ENCODE measurements at regions of chr12 and their contacts with region 1.

Region 1: DNA sequence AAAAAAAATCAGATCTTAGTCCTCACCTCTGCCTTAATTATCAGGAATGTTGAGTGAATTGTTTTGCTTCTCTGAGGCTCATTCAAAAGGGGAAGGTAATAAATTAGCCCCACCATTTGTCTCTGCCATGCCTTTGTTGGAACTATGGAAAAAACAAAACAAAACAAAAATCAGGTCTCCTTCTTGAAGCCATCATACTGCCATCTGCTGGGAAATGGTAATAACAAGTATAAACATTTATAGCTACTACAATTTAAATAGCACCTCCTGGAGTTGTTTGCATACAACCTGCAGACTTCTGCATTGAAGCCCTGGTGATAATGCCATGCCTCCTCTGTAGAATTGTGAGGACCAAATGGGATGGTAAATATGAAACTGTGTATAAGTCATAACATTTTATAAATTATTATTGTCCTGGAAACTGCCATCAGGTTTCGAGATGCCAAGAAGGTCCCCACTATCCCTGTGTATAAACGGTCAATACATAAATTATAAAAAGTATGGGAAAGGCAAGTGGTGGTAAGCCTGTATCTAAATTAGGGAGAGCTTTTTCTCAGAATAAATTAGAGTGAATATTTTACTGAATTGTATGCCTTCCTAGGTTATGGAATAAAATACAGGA is 87.2 kb upstream of the FGD4 start:
- DNase-seq: no peak
- ATAC-seq: no peak
- H3K4me3 Mint-ChIP-seq: no peak overlapping the region
- H3K27ac Mint-ChIP-seq: no peak overlapping the region
- H3K4me1 Mint-ChIP-seq: no peaks in the 10 kb centered on the region
- H3K27me3 Mint-ChIP-seq: no peaks in the 10 kb centered on the region
- CTCF ChIP-seq: peak; percentile 72

Region 2: GRCh38 chr12:32322354-32322753 is 10.2 kb after region 1 on chr12:
- CTCF ChIA-PET with region 1: interaction called, 11 read pairs
- POLR2A ChIA-PET with region 1: no interaction called
- intact Hi-C with region 1: no loop called
- DNase-seq: no peak
- ATAC-seq: no peak
- H3K4me3 Mint-ChIP-seq: no peak overlapping the region
- H3K27ac Mint-ChIP-seq: no peak overlapping the region
- H3K4me1 Mint-ChIP-seq: no peaks in the 10 kb centered on the region
- H3K27me3 Mint-ChIP-seq: no peaks in the 10 kb centered on the region
- CTCF ChIP-seq: no peak

Measured in activated CD8-positive, alpha-beta T cell treated with anti-CD3 and anti-CD28 coated beads for 36 hours (primary cell).